Naive thymus-derived CD8-positive, alpha-beta T cell (primary cell): ENCODE measurements at regions of chr6 and their contacts with region 1.

Region 1: GRCh38 chr6:79646006-79646405 is 14.9 kb downstream of the SH3BGRL2 start:
- DNase-seq: peak; percentile 5 to 76 (median 42)
- ATAC-seq: peak; percentile 90 to 99
- H3K4me3 Mint-ChIP-seq: peak overlapping the region in 9 of 10 donors; percentile 30 to 85 (median 63)
- H3K27ac Mint-ChIP-seq: peak overlapping the region in 7 of 10 donors; percentile 7 to 83 (median 60)
- H3K4me1 Mint-ChIP-seq: peaks cover 7 to 52% (median 30%) of the 10 kb centered on the region in 4 donors
- H3K27me3 Mint-ChIP-seq: peaks cover 0 to 10% (median 3%) of the 10 kb centered on the region in 5 donors

Region 2: GRCh38 chr6:79377888-79378348 is 268.1 kb before region 1 on chr6:
- POLR2A ChIA-PET with region 1: no interaction called
- DNase-seq: no peak
- ATAC-seq: no peak
- H3K4me3 Mint-ChIP-seq: no peak overlapping the region
- H3K27ac Mint-ChIP-seq: no peak overlapping the region
- H3K4me1 Mint-ChIP-seq: peaks cover 0 to 6% (median 0%) of the 10 kb centered on the region in 4 donors
- H3K27me3 Mint-ChIP-seq: peaks cover 0 to 9% (median 6%) of the 10 kb centered on the region in 5 donors

Region 3: DNA sequence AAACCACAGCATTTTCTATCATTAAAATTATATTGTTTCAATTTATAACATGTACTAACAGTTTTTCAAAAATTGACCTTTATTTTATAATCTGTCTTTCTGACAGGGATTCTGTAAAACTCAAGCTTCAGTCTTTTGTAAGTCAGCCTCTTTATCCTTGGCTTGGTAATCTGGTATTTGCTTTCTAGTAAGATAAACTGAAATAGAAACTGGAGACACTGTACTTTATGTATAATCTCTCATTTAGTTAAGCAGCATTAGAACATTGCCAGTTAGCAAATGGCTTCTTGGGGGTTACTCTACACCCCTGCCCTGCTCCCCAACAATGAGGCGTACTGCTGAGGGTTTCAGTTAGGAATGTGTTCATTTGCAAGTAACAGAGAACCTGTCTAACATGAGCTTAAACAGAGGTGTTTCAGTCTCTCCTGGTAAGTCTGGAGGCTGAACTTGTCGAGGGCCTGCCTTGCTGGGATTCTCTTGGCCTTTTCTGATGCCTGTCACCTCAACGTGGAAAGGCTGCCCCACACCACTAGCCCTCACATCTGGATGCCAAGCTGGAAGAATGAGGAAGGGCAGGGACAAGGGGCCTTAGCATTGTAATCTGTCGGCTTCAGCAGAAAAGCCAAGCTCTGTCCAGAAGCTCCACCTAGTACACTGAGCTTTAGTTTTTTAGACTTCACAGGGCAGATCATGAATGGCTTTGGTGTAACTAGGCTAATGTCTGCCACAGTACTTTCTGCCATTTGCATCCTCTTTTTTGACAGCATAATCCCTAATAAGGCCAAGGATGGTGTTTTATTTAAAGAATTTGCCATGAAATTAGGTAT is 19.9 kb after region 1 on chr6:
- POLR2A ChIA-PET with region 1: interaction called, 13 read pairs
- DNase-seq: no peak
- ATAC-seq: peak in 1 of 2 donors; percentile 20
- H3K4me3 Mint-ChIP-seq: peak overlapping the region in 5 of 10 donors; percentile 28 to 48 (median 42)
- H3K27ac Mint-ChIP-seq: peak overlapping the region; percentile 0 to 96 (median 82)
- H3K4me1 Mint-ChIP-seq: peaks cover 17 to 81% (median 58%) of the 10 kb centered on the region in 4 donors
- H3K27me3 Mint-ChIP-seq: peaks cover 0 to 6% (median 0%) of the 10 kb centered on the region in 5 donors

Region 4: GRCh38 chr6:79672631-79673111 is 26.7 kb after region 1 on chr6:
- POLR2A ChIA-PET with region 1: interaction called, 16 read pairs
- DNase-seq: peak in 3 of 10 donors; percentile 7 to 51 (median 37)
- ATAC-seq: peak; percentile 36 to 51
- H3K4me3 Mint-ChIP-seq: peak overlapping the region in 6 of 10 donors; percentile 2 to 65 (median 44)
- H3K27ac Mint-ChIP-seq: peak overlapping the region; percentile 37 to 94 (median 78)
- H3K4me1 Mint-ChIP-seq: peaks cover 22 to 66% (median 49%) of the 10 kb centered on the region in 4 donors
- H3K27me3 Mint-ChIP-seq: no peaks in the 10 kb centered on the region